Dorsolateral prefrontal cortex (tissue), 120 donors: ENCODE measurements at regions of chr7 and their contacts with region 1.

Region 1: DNA sequence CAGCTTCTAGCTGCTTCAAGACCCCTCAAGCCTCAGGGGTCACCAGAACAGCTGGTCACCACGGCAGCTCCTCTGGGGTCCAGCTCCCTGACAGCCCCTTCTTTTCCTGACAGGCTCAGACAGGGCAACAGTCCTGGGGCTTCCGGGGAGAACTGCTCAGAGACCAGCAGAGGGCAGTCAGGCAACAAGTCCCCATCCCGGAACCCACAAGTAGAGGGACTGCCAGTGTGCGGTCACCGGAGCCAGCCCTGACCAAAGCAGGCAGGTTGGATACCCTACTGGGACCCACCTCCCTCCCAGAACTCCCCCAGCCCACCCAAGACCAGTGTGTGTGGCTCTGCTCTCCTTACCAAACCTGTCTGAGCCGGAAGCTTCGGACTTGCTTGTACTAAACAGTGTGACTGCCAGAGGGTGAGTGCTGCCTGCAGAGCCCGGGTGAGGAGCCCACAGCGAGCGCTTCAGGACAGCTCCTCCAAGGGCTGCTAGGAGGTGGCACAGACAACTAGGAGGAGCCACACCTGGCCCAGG is 40.3 kb downstream of the YKT6 start:
- DNase-seq: peak; percentile 51 to 79 (median 71)
- H3K4me3 ChIP-seq: peak overlapping the region in 6 of 59 donors; percentile 10 to 40 (median 20)
- H3K27ac ChIP-seq: peak overlapping the region in 5 of 59 donors; percentile 26 to 53 (median 30)
- H3K27me3 ChIP-seq: no peaks in the 10 kb centered on the region
- CTCF ChIP-seq: peak in 55 of 56 donors; percentile 13 to 81 (median 66)

Region 2: DNA sequence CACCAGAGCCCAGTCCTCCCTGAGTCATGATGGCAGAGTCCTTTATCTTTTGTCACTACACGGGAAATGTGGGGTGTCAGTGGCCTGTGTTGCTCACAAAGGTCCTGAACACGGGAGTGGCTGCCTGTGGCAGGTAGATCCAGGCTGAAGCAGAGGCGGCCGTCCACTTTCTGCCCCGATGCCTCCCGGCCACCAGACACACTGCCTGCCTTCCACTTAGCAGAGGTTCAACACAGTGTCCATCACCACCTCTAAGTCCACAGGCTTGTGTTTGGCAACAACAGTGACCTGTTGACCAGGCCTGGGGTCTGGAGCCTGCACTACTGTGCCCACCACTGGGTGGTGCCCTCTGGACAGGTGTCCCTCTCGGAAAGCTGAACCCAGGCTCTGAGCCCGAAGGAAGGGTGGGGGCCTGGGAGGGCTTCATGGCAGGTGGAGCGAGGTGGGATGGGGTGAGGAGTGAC is 134.2 kb after region 1 on chr7:
- intact Hi-C with region 1: loop called in 1 of 2 experiments (anchors 5 kb)
- DNase-seq: peak in 1 of 10 donors; percentile 46
- H3K4me3 ChIP-seq: no peak overlapping the region
- H3K27ac ChIP-seq: no peak overlapping the region
- H3K27me3 ChIP-seq: no peaks in the 10 kb centered on the region
- CTCF ChIP-seq: peak in 47 of 56 donors; percentile 12 to 60 (median 39)

Region 3: GRCh38 chr7:44565097-44565794 is 324.2 kb after region 1 on chr7:
- intact Hi-C with region 1: loop called in 1 of 2 experiments (anchors 5 kb)
- DNase-seq: peak in 9 of 10 donors; percentile 53 to 80 (median 65)
- H3K4me3 ChIP-seq: no peak overlapping the region
- H3K27ac ChIP-seq: peak overlapping the region in 44 of 59 donors; percentile 4 to 89 (median 52)
- H3K27me3 ChIP-seq: no peaks in the 10 kb centered on the region
- CTCF ChIP-seq: peak; percentile 82 to 99 (median 96)